CD14-positive monocyte (primary cell): ENCODE measurements at regions of chr1 and their contacts with region 1.

Region 1: GRCh38 chr1:200409761-200410565 is at the start of gene ZNF281:
- DNase-seq: peak; percentile 90 to 94 (median 91)
- H3K4me3 ChIP-seq: peak within 1 kb of the TSS; percentile 60 to 88 (median 85)
- H3K4me3 Mint-ChIP-seq: peak within 1 kb of the TSS; percentile 94 to 99
- H3K27ac ChIP-seq: peak within 1 kb of the TSS; percentile 60 to 90
- H3K27ac Mint-ChIP-seq: peak within 1 kb of the TSS; percentile 87 to 97 (median 93)
- H3K4me1 ChIP-seq: peaks cover 39 to 56% of the 10 kb centered on the region in 2 donors
- H3K4me1 Mint-ChIP-seq: peaks cover 60% of the 10 kb centered on the region
- H3K27me3 ChIP-seq: no peaks in the 10 kb centered on the region
- H3K27me3 Mint-ChIP-seq: peaks cover 0 to 2% (median 1%) of the 10 kb centered on the region in 3 donors
- CTCF ChIP-seq: no peak
- polyA plus RNA-seq, gene ZNF281: 10.5 to 30.6 (median 26.6) TPM

Region 2: GRCh38 chr1:200351826-200352549 is 58.0 kb before region 1 on chr1:
- intact Hi-C with region 1: loop called in 1 of 2 experiments (anchors 10 kb)
- DNase-seq: peak; percentile 68 to 93 (median 86)
- H3K4me3 ChIP-seq: peak overlapping the region in 2 of 3 experiments; percentile 16 to 54
- H3K4me3 Mint-ChIP-seq: peak overlapping the region; percentile 51 to 79
- H3K27ac ChIP-seq: peak overlapping the region; percentile 13 to 80
- H3K27ac Mint-ChIP-seq: peak overlapping the region; percentile 87 to 98 (median 95)
- H3K4me1 ChIP-seq: peaks cover 56 to 58% of the 10 kb centered on the region in 2 donors
- H3K4me1 Mint-ChIP-seq: peaks cover 56% of the 10 kb centered on the region
- H3K27me3 ChIP-seq: no peaks in the 10 kb centered on the region
- H3K27me3 Mint-ChIP-seq: no peaks in the 10 kb centered on the region
- CTCF ChIP-seq: no peak

Region 3: DNA sequence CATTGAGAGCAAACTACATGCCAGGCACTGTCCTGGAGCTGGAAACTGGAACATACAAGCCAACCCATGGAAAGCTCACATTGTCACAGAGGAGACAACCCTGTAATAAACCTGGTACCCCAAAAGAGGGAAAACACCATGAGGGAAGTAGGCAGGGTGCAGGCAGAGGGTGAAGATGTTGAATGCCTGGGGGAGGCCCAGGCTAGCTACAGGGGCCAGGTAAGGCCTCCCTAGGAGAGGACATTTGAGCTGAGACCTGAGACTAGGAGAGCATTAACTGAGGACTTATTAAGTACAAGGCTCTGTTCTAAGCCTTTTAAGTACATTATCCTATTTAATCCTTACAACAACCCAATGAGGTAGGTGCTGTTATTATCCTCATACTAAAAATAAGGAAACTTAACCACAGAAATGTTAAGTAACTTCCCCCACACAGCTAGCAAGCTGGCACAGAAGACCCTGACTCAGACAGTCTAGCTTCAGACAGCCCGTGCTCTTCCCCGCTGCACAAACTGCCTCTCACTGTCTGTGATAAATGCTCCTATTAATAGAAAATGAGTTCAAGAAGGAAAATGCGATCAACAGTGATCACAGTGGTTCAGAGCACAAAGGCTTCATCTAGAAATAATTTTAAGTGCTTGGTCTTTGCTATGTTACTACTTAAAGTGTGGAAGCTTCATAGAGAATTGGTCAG is 42.0 kb before region 1 on chr1:
- intact Hi-C with region 1: loop called in 1 of 2 experiments (anchors 5 kb)
- DNase-seq: peak; percentile 71 to 87 (median 83)
- H3K4me3 ChIP-seq: peak overlapping the region in 1 of 3 experiments; percentile 37
- H3K4me3 Mint-ChIP-seq: peak overlapping the region; percentile 2 to 77
- H3K27ac ChIP-seq: peak overlapping the region; percentile 35 to 71
- H3K27ac Mint-ChIP-seq: peak overlapping the region; percentile 16 to 91 (median 87)
- H3K4me1 ChIP-seq: peaks cover 51 to 61% of the 10 kb centered on the region in 2 donors
- H3K4me1 Mint-ChIP-seq: peaks cover 58% of the 10 kb centered on the region
- H3K27me3 ChIP-seq: no peaks in the 10 kb centered on the region
- H3K27me3 Mint-ChIP-seq: no peaks in the 10 kb centered on the region
- CTCF ChIP-seq: no peak